MCF 10A (cell line): ENCODE measurements at regions of chr1 and their contacts with region 1.

Region 1: GRCh38 chr1:156212833-156213643 is at the start of gene PMF1:
- DNase-seq: peak; percentile 99
- H3K4me3 Mint-ChIP-seq: peak within 1 kb of the TSS; percentile 97
- H3K27ac Mint-ChIP-seq: peak within 1 kb of the TSS; percentile 96
- H3K4me1 Mint-ChIP-seq: peaks cover 21% of the 10 kb centered on the region
- H3K27me3 Mint-ChIP-seq: no peaks in the 10 kb centered on the region
- CTCF ChIP-seq: no peak
- total RNA-seq, gene PMF1: 51.0 and 77.7 TPM in 2 replicates

Region 2: DNA sequence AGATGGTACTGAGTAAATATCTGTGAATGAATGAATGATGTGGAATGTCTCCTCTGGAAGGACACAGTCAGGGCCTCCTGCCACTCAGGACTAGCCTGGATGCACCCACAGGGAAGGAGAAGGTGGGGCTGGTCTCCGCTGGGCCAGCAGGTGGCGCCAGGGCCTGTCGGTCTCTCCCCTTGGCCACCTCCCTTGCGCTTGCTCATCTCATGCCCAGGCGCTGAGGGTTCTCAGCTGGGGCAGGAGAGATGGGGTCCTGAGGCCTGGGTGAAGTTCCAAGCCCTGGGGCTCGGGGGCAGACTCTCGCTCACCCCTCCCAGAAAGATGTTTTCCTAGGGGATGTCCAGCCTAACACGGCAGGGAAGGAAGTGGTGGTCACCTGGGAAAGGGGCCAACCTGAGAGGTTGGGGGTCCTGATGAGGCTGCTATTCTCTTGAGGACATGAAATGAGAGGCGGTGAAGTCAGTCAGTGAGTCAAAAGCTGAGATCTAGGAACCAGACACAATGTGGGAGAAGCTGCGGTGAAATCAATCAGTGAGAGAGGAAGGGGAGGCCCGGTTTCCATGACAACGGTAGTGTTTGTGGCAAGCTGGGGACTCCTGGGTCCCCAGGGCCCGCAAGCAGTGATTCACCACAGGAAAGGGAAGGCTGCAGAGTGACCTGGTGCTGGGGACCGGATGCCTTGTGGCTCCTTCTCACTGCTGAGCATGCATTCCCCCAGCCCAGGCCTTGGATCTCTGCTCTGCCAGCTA is 116.2 kb before region 1 on chr1:
- CTCF ChIA-PET with region 1: interaction called, 524 read pairs
- POLR2A ChIA-PET with region 1: interaction called, 12 read pairs
- intact Hi-C with region 1: no loop called
- DNase-seq: peak; percentile 89
- H3K4me3 Mint-ChIP-seq: no peak overlapping the region
- H3K27ac Mint-ChIP-seq: peak overlapping the region; percentile 82
- H3K4me1 Mint-ChIP-seq: peaks cover 35% of the 10 kb centered on the region
- H3K27me3 Mint-ChIP-seq: no peaks in the 10 kb centered on the region
- CTCF ChIP-seq: peak; percentile 99

Region 3: DNA sequence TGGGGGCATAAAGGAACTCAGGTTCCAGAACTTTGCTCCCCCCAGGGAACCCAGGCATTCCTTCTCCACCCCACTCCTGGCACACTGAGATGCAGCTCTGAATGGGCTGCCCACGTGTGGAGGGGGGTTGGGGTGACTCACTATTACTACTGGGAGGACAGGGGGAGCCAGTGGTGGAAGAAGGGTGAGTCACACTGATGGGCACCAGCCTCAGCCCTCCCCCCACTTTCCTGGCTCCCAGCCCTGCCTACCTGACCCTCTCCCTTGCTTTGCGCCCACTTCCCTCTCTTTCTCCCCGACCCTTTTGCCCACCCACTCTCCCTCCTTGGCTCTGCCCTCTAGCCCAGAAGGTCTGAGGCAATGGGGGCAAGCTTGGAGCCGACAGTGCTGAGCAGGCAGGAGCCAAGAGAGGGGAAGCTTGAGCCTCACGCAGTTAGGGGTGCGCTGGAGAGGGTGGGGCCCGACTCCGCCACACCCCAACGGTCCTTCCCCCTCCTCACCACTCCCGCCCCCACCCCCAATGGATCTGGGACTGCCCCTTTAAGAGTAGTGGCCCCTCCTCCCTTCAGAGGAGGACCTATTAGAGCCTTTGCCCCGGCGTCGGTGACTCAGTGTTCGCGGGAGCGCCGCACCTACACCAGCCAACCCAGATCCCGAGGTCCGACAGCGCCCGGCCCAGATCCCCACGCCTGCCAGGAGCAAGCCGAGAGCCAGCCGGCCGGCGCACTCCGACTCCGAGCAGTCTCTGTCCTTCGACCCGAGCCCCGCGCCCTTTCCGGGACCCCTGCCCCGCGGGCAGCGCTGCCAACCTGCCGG is 98.7 kb before region 1 on chr1 and contains the start of gene LMNA:
- CTCF ChIA-PET with region 1: no interaction called
- POLR2A ChIA-PET with region 1: interaction called, 12 read pairs
- intact Hi-C with region 1: no loop called
- DNase-seq: peak; percentile 100
- H3K4me3 Mint-ChIP-seq: peak within 1 kb of the TSS; percentile 79
- H3K27ac Mint-ChIP-seq: peak within 1 kb of the TSS; percentile 97
- H3K4me1 Mint-ChIP-seq: peaks cover 46% of the 10 kb centered on the region
- H3K27me3 Mint-ChIP-seq: no peaks in the 10 kb centered on the region
- CTCF ChIP-seq: no peak
- total RNA-seq, gene LMNA: 620 and 716 TPM in 2 replicates

Region 4: DNA sequence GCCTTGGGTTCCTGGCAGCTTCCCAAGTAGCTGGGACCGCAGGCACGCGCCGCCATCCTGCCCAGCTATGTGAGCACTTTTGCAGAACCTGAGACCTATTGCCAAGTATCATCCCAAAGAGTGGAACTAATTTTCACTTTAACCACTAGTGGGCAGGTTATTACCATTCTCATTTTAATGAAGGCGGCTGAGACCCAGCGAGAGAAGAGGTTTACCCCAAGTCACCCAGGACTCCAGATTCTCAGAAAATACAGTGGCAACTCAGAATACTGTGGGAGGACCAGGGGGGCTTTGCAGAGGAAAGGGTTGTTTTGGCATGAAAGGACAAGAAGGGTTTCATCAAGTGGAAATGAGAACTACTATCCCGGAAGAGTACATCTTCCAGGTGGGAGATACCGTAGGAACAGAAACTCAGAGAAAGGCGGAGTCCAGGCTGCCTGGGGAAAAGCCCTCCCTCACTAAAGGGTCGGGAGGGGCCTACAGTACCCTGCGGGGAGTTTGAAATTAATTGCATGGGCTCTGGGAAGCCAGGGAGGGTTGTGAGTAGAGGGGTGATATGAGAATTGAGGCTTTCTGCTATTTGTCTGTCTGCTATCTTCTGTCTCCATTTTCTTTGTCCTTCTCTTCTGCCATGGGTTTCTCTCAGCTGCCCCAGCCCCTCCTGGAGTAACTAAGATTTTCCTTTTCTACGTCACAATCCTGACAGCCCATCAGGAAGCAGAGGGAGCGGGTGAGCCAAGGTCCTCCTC is 66.8 kb before region 1 on chr1:
- CTCF ChIA-PET with region 1: interaction called, 7 read pairs
- POLR2A ChIA-PET with region 1: interaction called, 8 read pairs
- intact Hi-C with region 1: loop called (anchors 5 kb)
- DNase-seq: peak; percentile 97
- H3K4me3 Mint-ChIP-seq: peak overlapping the region; percentile 24
- H3K27ac Mint-ChIP-seq: no peak overlapping the region
- H3K4me1 Mint-ChIP-seq: peaks cover 29% of the 10 kb centered on the region
- H3K27me3 Mint-ChIP-seq: no peaks in the 10 kb centered on the region
- CTCF ChIP-seq: peak; percentile 60

Region 5: GRCh38 chr1:156172696-156173470 is 40.2 kb before region 1 on chr1:
- CTCF ChIA-PET with region 1: no interaction called
- POLR2A ChIA-PET with region 1: no interaction called
- intact Hi-C with region 1: no loop called
- DNase-seq: no peak
- H3K4me3 Mint-ChIP-seq: no peak overlapping the region
- H3K27ac Mint-ChIP-seq: no peak overlapping the region
- H3K4me1 Mint-ChIP-seq: no peaks in the 10 kb centered on the region
- H3K27me3 Mint-ChIP-seq: peaks cover 30% of the 10 kb centered on the region
- CTCF ChIP-seq: no peak

Region 6: DNA sequence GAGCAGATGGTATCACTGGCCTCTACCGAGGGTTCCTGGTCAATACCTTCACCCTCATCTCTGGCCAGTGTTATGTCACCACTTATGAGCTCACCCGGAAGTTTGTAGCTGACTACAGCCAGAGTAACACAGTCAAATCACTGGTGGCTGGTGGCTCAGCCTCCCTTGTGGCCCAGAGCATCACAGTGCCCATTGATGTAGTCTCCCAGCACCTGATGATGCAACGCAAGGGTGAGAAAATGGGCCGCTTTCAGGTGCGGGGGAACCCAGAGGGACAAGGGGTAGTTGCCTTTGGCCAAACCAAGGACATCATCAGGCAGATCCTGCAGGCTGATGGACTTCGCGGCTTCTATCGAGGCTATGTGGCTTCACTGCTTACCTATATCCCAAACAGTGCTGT is 13.0 kb before region 1 on chr1:
- CTCF ChIA-PET with region 1: interaction called, 9 read pairs
- POLR2A ChIA-PET with region 1: interaction called, 131 read pairs
- intact Hi-C with region 1: no loop called
- DNase-seq: no peak
- H3K4me3 Mint-ChIP-seq: no peak overlapping the region
- H3K27ac Mint-ChIP-seq: no peak overlapping the region
- H3K4me1 Mint-ChIP-seq: peaks cover 7% of the 10 kb centered on the region
- H3K27me3 Mint-ChIP-seq: no peaks in the 10 kb centered on the region
- CTCF ChIP-seq: no peak

Region 7: DNA sequence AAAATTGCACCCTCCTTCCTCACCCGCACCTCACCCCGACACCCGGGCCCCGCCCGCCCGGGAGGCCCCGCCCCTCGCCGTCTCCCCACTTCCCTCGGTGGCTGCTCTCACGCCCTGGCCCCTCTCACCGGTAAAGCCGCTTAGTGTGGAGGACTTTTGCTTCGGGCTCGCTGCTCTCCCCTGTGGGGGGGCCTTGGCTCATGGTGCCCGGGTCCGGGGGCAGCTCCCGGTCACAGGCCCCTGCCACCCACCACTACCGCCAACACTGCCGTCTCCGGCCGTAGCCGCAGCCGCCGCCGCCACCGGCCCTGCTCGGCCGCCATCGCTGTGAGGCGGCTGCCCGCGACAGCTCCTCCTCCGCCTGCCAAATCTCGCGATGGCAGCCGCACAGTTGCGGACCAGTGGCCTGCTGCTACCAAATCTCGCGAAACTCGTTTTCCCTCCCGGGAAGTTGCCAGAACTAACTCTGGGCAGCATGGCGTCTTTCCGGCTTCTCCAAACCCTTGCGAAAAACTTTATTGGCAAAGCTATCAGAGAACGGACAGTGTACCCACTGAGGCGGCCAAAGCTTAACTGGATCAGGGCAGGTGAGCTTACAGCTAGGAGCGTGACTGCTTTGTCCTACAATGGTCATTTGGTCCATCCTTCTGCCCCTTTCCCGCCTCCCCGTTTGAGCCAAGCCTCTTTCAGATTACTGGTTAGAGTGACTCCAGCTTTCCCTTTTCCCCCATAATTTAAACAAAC is 69.6 kb after region 1 on chr1 and contains the start of gene SMG5:
- CTCF ChIA-PET with region 1: interaction called, 5 read pairs
- POLR2A ChIA-PET with region 1: interaction called, 40 read pairs
- intact Hi-C with region 1: no loop called
- DNase-seq: peak; percentile 100
- H3K4me3 Mint-ChIP-seq: peak within 1 kb of the TSS; percentile 92
- H3K27ac Mint-ChIP-seq: peak within 1 kb of the TSS; percentile 93
- H3K4me1 Mint-ChIP-seq: peaks cover 38% of the 10 kb centered on the region
- H3K27me3 Mint-ChIP-seq: no peaks in the 10 kb centered on the region
- CTCF ChIP-seq: no peak
- total RNA-seq, gene SMG5: 118 and 140 TPM in 2 replicates